Esophagus muscularis mucosa (tissue), 4 donors: ENCODE measurements at regions of chr3 and their contacts with region 1.

Region 1: GRCh38 chr3:120498556-120499346 is 48.0 kb upstream of the FSTL1 start:
- DNase-seq: peak; percentile 87
- H3K4me3 ChIP-seq: no peak overlapping the region
- H3K27ac ChIP-seq: peak overlapping the region; percentile 58 to 81 (median 72)
- H3K4me1 ChIP-seq: peaks cover 9 to 38% (median 35%) of the 10 kb centered on the region in 4 donors
- H3K27me3 ChIP-seq: no peaks in the 10 kb centered on the region
- CTCF ChIP-seq: no peak
- EP300 ChIP-seq: no peak
- POLR2A ChIP-seq: no peak

Region 2: DNA sequence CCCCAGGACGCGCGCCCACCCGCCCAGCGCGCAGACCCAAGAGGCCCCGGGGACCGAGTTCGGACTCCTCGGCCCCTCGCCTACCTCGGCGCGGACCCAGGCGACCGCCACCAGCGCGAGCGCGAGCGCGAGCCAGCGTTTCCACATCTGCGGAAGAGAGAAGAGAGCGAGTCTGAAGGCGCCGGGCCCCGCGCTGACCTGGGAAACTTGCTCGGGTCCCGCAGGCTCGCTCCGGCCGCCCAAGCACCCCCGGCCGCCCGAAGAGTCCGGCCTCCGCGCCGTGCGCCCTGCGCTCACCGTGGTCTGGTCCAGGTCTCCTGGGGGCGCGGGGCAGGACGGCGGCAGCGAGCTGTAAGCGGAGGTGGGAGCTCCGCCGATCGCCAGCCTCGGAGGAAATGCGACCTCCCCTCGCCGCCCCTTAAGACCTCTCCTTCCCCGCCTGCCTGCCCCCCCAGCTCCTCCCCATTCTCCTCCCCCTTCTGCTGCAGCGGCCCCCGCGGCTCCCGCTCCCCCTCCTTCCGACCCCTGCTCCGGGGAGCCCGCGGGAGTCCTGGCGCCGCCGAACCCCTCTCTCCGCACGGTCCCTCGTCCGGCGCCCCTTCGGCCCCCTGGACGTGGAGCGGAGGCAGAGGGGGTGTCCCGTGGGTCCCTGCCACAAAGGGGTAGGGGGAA is 48.0 kb before region 1 on chr3 and contains the start of gene FSTL1:
- intact Hi-C with region 1: loop called (anchors 2 kb)
- DNase-seq: no peak
- H3K4me3 ChIP-seq: peak within 1 kb of the TSS; percentile 67 to 98 (median 91)
- H3K27ac ChIP-seq: peak within 1 kb of the TSS; percentile 93 to 100 (median 97)
- H3K4me1 ChIP-seq: peaks cover 41 to 48% (median 46%) of the 10 kb centered on the region in 4 donors
- H3K27me3 ChIP-seq: no peaks in the 10 kb centered on the region
- CTCF ChIP-seq: peak in 1 of 3 experiments; percentile 2
- EP300 ChIP-seq: no peak
- POLR2A ChIP-seq: peak; percentile 43
- total RNA-seq, gene FSTL1: 409 to 701 (median 677) TPM

Region 3: DNA sequence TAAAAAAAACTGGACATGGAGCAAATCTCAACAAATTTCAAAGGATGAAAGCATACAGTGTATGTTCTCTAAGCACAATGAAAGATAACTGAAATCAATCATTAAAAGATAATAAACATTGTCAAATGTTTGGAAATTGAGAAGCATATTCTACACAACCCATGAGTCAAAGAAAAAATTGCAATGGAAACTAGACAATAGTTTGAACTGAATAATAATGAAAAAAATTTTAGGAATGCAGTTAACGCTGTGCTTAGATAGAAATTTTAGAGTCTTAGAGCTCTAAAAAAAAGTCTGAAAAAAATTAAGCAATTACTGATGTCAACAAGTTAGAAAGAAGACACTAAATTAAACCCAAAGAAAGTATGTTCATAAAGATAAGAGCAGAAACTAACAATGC is 228.0 kb after region 1 on chr3:
- intact Hi-C with region 1: no loop called
- DNase-seq: no peak
- H3K4me3 ChIP-seq: no peak overlapping the region
- H3K27ac ChIP-seq: no peak overlapping the region
- H3K4me1 ChIP-seq: no peaks in the 10 kb centered on the region
- H3K27me3 ChIP-seq: no peaks in the 10 kb centered on the region
- CTCF ChIP-seq: no peak
- EP300 ChIP-seq: no peak
- POLR2A ChIP-seq: no peak

Region 4: GRCh38 chr3:120841264-120841663 is 342.5 kb after region 1 on chr3:
- intact Hi-C with region 1: no loop called
- DNase-seq: no peak
- H3K4me3 ChIP-seq: no peak overlapping the region
- H3K27ac ChIP-seq: no peak overlapping the region
- H3K4me1 ChIP-seq: no peaks in the 10 kb centered on the region
- H3K27me3 ChIP-seq: peaks cover 0 to 4% (median 0%) of the 10 kb centered on the region in 4 donors
- CTCF ChIP-seq: no peak
- EP300 ChIP-seq: no peak
- POLR2A ChIP-seq: no peak